Sigmoid colon (tissue), 7 donors: ENCODE measurements at regions of chr15 and their contacts with region 1.

Region 1: GRCh38 chr15:41557673-41558399 is 1.2 kb upstream of the TYRO3 start:
- DNase-seq: peak; percentile 78
- H3K4me3 ChIP-seq: peak overlapping the region in 2 of 4 donors; percentile 73 to 84
- H3K27ac ChIP-seq: peak overlapping the region; percentile 2 to 66 (median 46)
- H3K4me1 ChIP-seq: peaks cover 0 to 20% (median 17%) of the 10 kb centered on the region in 4 donors
- H3K27me3 ChIP-seq: no peaks in the 10 kb centered on the region
- CTCF ChIP-seq: peak in 3 of 4 experiments; percentile 45 to 61 (median 60)
- EP300 ChIP-seq: no peak
- POLR2A ChIP-seq: no peak

Region 2: GRCh38 chr15:41585127-41586047 is 27.6 kb after region 1 on chr15:
- intact Hi-C with region 1: loop called (anchors 2 kb)
- DNase-seq: no peak
- H3K4me3 ChIP-seq: peak overlapping the region; percentile 16 to 60 (median 53)
- H3K27ac ChIP-seq: peak overlapping the region; percentile 38 to 76 (median 72)
- H3K4me1 ChIP-seq: peaks cover 0 to 9% (median 6%) of the 10 kb centered on the region in 4 donors
- H3K27me3 ChIP-seq: no peaks in the 10 kb centered on the region
- CTCF ChIP-seq: peak; percentile 33 to 67 (median 48)
- EP300 ChIP-seq: no peak
- POLR2A ChIP-seq: no peak

Region 3: DNA sequence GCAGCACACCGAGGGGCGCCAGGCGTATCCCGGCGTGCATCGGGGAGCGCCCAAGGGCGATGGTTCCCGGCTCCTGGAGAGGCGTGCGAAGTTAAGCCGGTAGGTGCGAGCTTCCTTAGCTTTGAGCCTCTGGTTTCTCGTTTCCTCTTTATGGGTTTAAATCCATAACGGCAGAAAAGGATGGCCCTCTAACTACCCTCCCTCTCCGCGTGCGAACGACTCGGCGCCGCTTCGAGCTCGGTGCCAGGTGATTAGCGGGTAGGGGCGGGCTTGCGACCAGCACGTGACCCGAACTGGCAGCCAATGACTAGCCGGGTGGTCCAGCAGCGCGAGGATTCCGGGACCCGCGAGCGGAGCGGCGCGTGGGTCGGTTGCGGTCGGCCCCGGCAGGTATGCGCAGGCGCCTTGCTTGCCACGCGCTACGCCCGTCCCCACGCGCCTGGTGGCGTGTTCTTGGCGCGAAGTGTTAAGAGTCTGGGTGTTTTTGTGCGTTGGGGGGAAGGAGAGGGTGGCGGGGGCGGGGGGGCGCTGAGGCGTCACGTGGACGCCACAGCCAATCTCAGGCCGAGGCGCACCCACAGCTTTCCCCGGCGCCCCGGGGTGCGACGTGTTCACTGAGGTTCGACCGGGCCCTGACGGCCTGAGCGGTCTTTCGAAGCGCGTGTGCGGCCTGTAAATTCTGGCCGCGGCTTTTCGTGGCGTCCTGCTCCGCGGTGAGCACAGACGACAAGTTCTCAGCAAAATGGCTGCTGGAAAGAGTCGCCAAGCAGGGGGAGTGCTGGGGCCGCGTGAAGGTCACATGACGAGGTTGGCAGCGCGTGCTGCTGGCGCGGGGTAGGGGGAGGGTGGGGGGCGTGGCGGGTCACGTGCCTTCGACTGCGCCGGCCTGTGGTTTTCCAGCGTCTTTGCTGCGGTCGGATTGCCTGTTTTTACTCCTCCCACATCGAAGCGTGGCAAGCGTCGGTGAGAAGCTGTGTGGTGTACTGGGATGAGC is 63.7 kb after region 1 on chr15:
- intact Hi-C with region 1: loop called (anchors 5 kb)
- DNase-seq: peak; percentile 92
- H3K4me3 ChIP-seq: peak overlapping the region; percentile 28 to 68 (median 52)
- H3K27ac ChIP-seq: peak overlapping the region; percentile 71 to 82 (median 76)
- H3K4me1 ChIP-seq: peaks cover 0 to 20% (median 8%) of the 10 kb centered on the region in 4 donors
- H3K27me3 ChIP-seq: no peaks in the 10 kb centered on the region
- CTCF ChIP-seq: no peak
- EP300 ChIP-seq: no peak
- POLR2A ChIP-seq: no peak

Region 4: GRCh38 chr15:41660235-41661077 is 102.6 kb after region 1 on chr15 and contains the start of gene MGA:
- intact Hi-C with region 1: loop called (anchors 5 kb)
- DNase-seq: peak; percentile 95
- H3K4me3 ChIP-seq: peak within 1 kb of the TSS; percentile 41 to 62 (median 55)
- H3K27ac ChIP-seq: peak within 1 kb of the TSS; percentile 75 to 86 (median 82)
- H3K4me1 ChIP-seq: peaks cover 0 to 45% (median 29%) of the 10 kb centered on the region in 4 donors
- H3K27me3 ChIP-seq: no peaks in the 10 kb centered on the region
- CTCF ChIP-seq: no peak
- EP300 ChIP-seq: no peak
- POLR2A ChIP-seq: no peak
- total RNA-seq, gene MGA: 36.0 to 64.8 (median 60.6) TPM